ENCODE measurements at regions of chr5 and their contacts with region 1.

Region 1: GRCh38 chr5:163473635-163474243 is 13.3 kb downstream of the HMMR start:
- DNase-seq: no peak
- ATAC-seq: no peak
- H3K4me3 Mint-ChIP-seq: no peak overlapping the region
- H3K27ac Mint-ChIP-seq: no peak overlapping the region
- H3K4me1 Mint-ChIP-seq: peaks cover 6% of the 10 kb centered on the region
- H3K27me3 Mint-ChIP-seq: no peaks in the 10 kb centered on the region

Region 2: DNA sequence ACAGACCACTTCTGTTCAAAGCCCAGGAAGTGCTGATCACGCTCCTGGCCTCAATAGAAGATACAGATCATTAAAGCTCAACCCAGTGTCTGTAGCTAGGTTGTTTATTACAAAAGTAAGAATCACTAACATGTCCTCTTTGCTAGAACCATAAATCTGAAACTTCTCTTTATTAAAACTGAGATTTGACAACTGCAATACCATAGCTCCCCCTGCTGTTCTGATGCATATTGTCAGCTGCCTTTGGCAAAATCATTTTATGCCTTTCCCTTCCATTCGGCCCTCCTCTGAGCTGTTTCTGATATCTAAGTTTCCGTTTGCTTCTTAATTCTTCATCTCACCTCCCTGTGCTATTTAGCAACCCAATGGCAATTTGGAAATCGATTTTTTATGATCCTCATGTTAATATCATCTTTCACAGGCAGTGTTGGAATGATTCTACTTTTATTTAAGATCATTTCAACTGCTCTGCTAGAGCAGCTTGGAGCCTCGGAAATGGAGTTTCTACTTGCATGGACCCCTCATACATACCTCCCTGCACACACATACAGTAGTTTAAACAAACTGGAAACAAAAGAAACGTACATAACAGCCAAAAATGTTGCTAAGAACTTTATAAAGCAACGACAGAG is 1030.5 kb after region 1 on chr5:
- CTCF ChIA-PET with region 1: no interaction called
- POLR2A ChIA-PET with region 1: no interaction called
- intact Hi-C with region 1: loop called in 1 of 2 experiments (anchors 10 kb)
- DNase-seq: peak; percentile 34
- ATAC-seq: no peak
- H3K4me3 Mint-ChIP-seq: no peak overlapping the region
- H3K27ac Mint-ChIP-seq: no peak overlapping the region
- H3K4me1 Mint-ChIP-seq: no peaks in the 10 kb centered on the region
- H3K27me3 Mint-ChIP-seq: no peaks in the 10 kb centered on the region